CD4-positive, alpha-beta memory T cell (primary cell): ENCODE measurements at regions of chrX and their contacts with region 1.

Region 1: GRCh38 chrX:129637217-129638109 is 17.3 kb downstream of the APLN start:
- DNase-seq: peak; percentile 60 to 76 (median 65)
- H3K4me3 ChIP-seq: no peak overlapping the region
- H3K4me3 Mint-ChIP-seq: peak overlapping the region in 2 of 8 donors; percentile 0 to 35
- H3K27ac ChIP-seq: no peak overlapping the region
- H3K27ac Mint-ChIP-seq: peak overlapping the region in 1 of 7 donors; percentile 79
- H3K4me1 ChIP-seq: peaks cover 7% of the 10 kb centered on the region
- H3K4me1 Mint-ChIP-seq: peaks cover 0 to 12% (median 2%) of the 10 kb centered on the region in 4 donors
- H3K27me3 ChIP-seq: no peaks in the 10 kb centered on the region
- H3K27me3 Mint-ChIP-seq: no peaks in the 10 kb centered on the region

Region 2: GRCh38 chrX:129678614-129679195 is 41.2 kb after region 1 on chrX:
- CTCF ChIA-PET with region 1: interaction called, 20 read pairs
- POLR2A ChIA-PET with region 1: no interaction called
- intact Hi-C with region 1: no loop called
- DNase-seq: peak in 3 of 5 donors; percentile 38 to 66 (median 41)
- H3K4me3 ChIP-seq: peak overlapping the region; percentile 11 to 60
- H3K4me3 Mint-ChIP-seq: peak overlapping the region; percentile 75 to 88 (median 78)
- H3K27ac ChIP-seq: peak overlapping the region; percentile 43
- H3K27ac Mint-ChIP-seq: peak overlapping the region; percentile 10 to 86 (median 71)
- H3K4me1 ChIP-seq: peaks cover 10% of the 10 kb centered on the region
- H3K4me1 Mint-ChIP-seq: peaks cover 1 to 20% (median 6%) of the 10 kb centered on the region in 4 donors
- H3K27me3 ChIP-seq: no peaks in the 10 kb centered on the region
- H3K27me3 Mint-ChIP-seq: no peaks in the 10 kb centered on the region

Region 3: DNA sequence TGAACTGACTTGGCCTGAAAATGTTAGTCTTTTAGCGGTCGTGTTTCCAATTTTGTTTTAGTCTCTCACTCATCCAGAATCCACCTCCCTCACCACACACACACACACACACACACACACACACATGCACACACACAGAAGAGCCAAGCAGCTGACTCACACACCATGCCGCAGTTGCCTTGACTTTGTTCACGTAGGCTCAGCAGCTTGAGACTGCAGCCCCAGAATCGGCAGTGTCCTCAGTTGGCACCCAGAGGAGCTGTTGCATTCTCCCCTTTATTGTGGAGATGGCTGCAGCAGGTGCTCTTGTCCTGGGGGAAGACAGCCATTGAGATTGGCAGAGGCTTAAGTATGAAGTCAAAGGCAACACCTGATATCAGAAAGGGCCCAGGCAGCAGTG is 80.4 kb after region 1 on chrX:
- CTCF ChIA-PET with region 1: no interaction called
- POLR2A ChIA-PET with region 1: no interaction called
- intact Hi-C with region 1: no loop called
- DNase-seq: no peak
- H3K4me3 ChIP-seq: no peak overlapping the region
- H3K4me3 Mint-ChIP-seq: no peak overlapping the region
- H3K27ac ChIP-seq: no peak overlapping the region
- H3K27ac Mint-ChIP-seq: no peak overlapping the region
- H3K4me1 ChIP-seq: peaks cover 11% of the 10 kb centered on the region
- H3K4me1 Mint-ChIP-seq: peaks cover 7 to 18% (median 10%) of the 10 kb centered on the region in 4 donors
- H3K27me3 ChIP-seq: no peaks in the 10 kb centered on the region
- H3K27me3 Mint-ChIP-seq: no peaks in the 10 kb centered on the region

Region 4: GRCh38 chrX:129876771-129877305 is 239.4 kb after region 1 on chrX:
- CTCF ChIA-PET with region 1: interaction called, 3 read pairs
- POLR2A ChIA-PET with region 1: no interaction called
- intact Hi-C with region 1: loop called (anchors 1 kb)
- DNase-seq: no peak
- H3K4me3 ChIP-seq: no peak overlapping the region
- H3K4me3 Mint-ChIP-seq: no peak overlapping the region
- H3K27ac ChIP-seq: no peak overlapping the region
- H3K27ac Mint-ChIP-seq: no peak overlapping the region
- H3K4me1 ChIP-seq: no peaks in the 10 kb centered on the region
- H3K4me1 Mint-ChIP-seq: no peaks in the 10 kb centered on the region
- H3K27me3 ChIP-seq: no peaks in the 10 kb centered on the region
- H3K27me3 Mint-ChIP-seq: no peaks in the 10 kb centered on the region

Region 5: GRCh38 chrX:129957241-129958082 is 320.0 kb after region 1 on chrX:
- CTCF ChIA-PET with region 1: no interaction called
- POLR2A ChIA-PET with region 1: no interaction called
- intact Hi-C with region 1: no loop called
- DNase-seq: peak in 1 of 5 donors; percentile 47
- H3K4me3 ChIP-seq: peak overlapping the region in 1 of 2 donors; percentile 28
- H3K4me3 Mint-ChIP-seq: peak overlapping the region in 7 of 8 donors; percentile 46 to 70 (median 64)
- H3K27ac ChIP-seq: no peak overlapping the region
- H3K27ac Mint-ChIP-seq: peak overlapping the region in 4 of 7 donors; percentile 50 to 61 (median 57)
- H3K4me1 ChIP-seq: peaks cover 22% of the 10 kb centered on the region
- H3K4me1 Mint-ChIP-seq: peaks cover 14 to 49% (median 26%) of the 10 kb centered on the region in 4 donors
- H3K27me3 ChIP-seq: no peaks in the 10 kb centered on the region
- H3K27me3 Mint-ChIP-seq: peaks cover 2% of the 10 kb centered on the region in 2 donors

Region 6: GRCh38 chrX:130024127-130024526 is 386.7 kb after region 1 on chrX:
- CTCF ChIA-PET with region 1: interaction called, 12 read pairs
- POLR2A ChIA-PET with region 1: no interaction called
- intact Hi-C with region 1: loop called (anchors 10 kb)
- DNase-seq: peak; percentile 81 to 87 (median 83)
- H3K4me3 ChIP-seq: no peak overlapping the region
- H3K4me3 Mint-ChIP-seq: peak overlapping the region in 6 of 8 donors; percentile 22 to 72 (median 58)
- H3K27ac ChIP-seq: no peak overlapping the region
- H3K27ac Mint-ChIP-seq: peak overlapping the region; percentile 75 to 91 (median 82)
- H3K4me1 ChIP-seq: peaks cover 12% of the 10 kb centered on the region
- H3K4me1 Mint-ChIP-seq: peaks cover 8 to 16% (median 12%) of the 10 kb centered on the region in 4 donors
- H3K27me3 ChIP-seq: no peaks in the 10 kb centered on the region
- H3K27me3 Mint-ChIP-seq: no peaks in the 10 kb centered on the region